ENCODE measurements at regions of chr1 and their contacts with region 1.

Region 1: DNA sequence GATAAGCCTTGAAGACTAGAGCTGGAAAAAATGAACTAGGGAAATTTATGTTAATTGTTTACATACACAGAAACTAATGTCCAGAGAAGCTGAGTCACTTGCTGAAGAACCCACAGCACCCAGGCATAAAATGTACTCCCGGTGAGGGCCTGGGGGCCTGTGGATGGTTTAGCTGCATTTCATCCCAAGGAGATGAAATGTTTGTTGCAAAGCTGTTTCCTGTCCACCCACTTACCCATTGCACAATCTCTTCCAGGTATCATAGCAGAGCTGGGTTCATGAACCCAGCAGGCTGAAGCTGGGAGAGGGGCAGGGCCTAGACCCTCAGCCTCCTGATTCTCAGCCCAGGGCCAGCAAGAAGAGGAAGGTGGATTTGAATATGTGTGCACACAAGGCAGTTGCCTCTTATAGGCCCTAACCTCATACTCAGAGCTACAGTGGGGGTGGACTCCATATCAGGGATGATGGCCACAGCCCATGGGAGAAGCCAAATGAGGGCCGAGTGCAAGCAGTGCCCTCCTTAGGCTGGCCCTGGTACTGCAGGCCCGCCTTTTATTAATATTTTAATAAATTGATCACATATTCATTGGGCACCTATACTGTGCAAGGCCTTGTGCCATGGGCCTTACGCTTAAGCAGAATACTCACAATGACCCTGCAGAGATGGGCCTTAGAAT is 110.8 kb downstream of the LACTBL1 start:
- DNase-seq: peak; percentile 45 to 83 (median 78)
- ATAC-seq: peak; percentile 86
- H3K4me3 ChIP-seq: no peak overlapping the region
- H3K27ac ChIP-seq: no peak overlapping the region
- H3K4me1 ChIP-seq: no peaks in the 10 kb centered on the region
- H3K27me3 ChIP-seq: peaks cover 19 to 67% of the 10 kb centered on the region in 2 experiments
- CTCF ChIP-seq: peak; percentile 83 to 92 (median 90)
- EP300 ChIP-seq: no peak
- POLR2A ChIP-seq: no peak
- RAD21 ChIP-seq: peak; percentile 41 to 72; a peak in 3 of 4 replicates

Region 2: DNA sequence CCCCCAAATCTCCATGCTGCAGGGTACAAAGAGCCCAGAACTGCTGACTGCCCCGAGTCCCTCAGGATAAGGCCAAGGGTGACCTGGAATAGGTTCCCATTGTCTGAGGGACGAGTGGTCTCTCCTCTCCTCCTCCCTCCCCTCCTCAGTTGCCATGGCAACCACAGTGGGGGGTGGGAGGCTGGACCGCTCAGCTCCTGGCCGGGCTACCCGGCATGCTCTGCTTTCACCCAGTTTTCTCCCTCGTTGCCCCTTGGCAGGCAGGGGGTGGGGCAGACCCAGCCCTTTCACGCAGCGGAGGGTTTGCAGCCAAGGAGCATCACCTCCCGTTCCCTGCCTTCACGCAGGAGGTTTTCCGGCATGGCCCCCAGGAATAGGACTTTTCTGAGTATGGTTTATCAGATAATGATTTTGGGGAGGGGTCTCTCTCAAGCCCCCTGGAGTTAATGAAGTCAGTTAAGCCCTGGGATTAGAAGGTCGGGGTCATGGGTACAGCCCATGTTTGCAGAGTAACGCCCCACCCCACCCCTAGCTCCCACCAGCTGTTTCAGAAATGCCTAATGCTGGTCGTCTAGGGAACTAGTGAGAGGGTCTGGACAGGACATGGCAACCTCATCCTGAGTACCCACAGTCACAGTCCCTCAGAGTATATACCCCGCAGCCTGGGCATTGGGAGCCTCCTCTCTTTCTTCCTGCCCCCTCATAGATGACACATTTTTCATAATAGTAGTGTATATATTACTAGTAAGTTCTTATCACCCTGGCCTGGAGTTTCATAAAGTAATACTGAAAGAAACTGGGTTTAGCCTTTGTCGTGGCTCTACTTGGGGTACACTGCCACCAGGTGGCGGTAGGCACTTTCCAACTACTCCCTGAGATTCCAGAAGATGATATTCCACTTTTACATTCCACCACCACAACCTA is 188.2 kb before region 1 on chr1:
- CTCF ChIA-PET with region 1: interaction called, 4 read pairs
- POLR2A ChIA-PET with region 1: no interaction called
- in situ Hi-C with region 1: no loop called
- intact Hi-C with region 1: loop called (anchors 1 kb)
- DNase-seq: peak; percentile 57 to 70 (median 66)
- ATAC-seq: peak; percentile 81
- H3K4me3 ChIP-seq: no peak overlapping the region
- H3K27ac ChIP-seq: no peak overlapping the region
- H3K4me1 ChIP-seq: peaks cover 0 to 9% of the 10 kb centered on the region in 2 experiments; a peak in 1 of 5 replicates
- H3K27me3 ChIP-seq: peaks cover 8 to 47% of the 10 kb centered on the region in 2 experiments; a peak in 4 of 5 replicates
- CTCF ChIP-seq: peak; percentile 68 to 81 (median 72)
- EP300 ChIP-seq: no peak
- POLR2A ChIP-seq: no peak
- RAD21 ChIP-seq: peak; percentile 57 to 84

Measured in K562 (cell line).